AG04450 (cell line): ENCODE measurements at regions of chr7 and their contacts with region 1.

Region 1: GRCh38 chr7:155344600-155345433 is 47.1 kb downstream of the INSIG1 start:
- DNase-seq: peak; percentile 26
- H3K4me3 ChIP-seq: peak overlapping the region; percentile 43
- H3K27ac ChIP-seq: no peak overlapping the region
- H3K27me3 ChIP-seq: no peaks in the 10 kb centered on the region
- CTCF ChIP-seq: peak; percentile 64

Region 2: DNA sequence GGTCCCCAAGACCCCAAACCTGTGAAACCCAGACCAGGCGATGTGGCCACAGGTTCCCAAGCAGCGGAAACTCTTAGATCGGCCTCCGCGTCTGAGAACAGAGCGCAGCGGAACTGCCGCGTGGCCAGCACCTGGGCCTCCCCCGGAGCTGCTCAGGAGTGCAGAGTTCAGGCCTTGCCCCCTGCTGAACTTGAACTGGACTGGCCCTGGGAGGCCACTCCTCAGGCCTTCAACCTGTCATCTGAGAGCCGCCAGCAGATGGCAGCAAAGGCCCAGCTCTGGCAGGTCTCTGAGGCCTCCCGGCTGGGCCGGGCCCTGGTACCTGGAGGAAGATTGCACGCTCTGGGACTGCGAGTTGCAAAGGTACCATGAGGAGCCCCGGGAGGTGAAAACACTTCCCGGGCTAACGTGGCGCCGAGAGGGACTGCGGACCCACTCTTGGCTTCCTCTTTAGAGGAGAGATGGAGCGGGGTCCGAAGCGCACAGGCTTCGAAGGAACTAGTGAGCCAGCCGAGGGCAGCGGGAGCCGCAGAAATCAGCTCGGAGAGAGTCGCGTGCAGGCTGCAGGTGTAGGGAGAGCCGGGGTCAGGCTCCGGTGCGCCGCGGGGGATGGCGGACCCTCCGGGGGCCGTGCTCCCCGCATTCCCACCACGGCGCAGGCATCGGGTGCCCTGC is 431.0 kb before region 1 on chr7:
- CTCF ChIA-PET with region 1: interaction called, 20 read pairs
- POLR2A ChIA-PET with region 1: no interaction called
- DNase-seq: peak; percentile 26
- H3K4me3 ChIP-seq: peak overlapping the region; percentile 32; the same call in 1 of the 2 replicates
- H3K27ac ChIP-seq: no peak overlapping the region
- H3K27me3 ChIP-seq: peaks cover 2% of the 10 kb centered on the region
- CTCF ChIP-seq: peak; percentile 94

Region 3: GRCh38 chr7:154978017-154978416 is 366.8 kb before region 1 on chr7:
- CTCF ChIA-PET with region 1: interaction called, 13 read pairs
- POLR2A ChIA-PET with region 1: no interaction called
- DNase-seq: no peak
- H3K4me3 ChIP-seq: no peak overlapping the region
- H3K27ac ChIP-seq: no peak overlapping the region
- H3K27me3 ChIP-seq: no peaks in the 10 kb centered on the region
- CTCF ChIP-seq: no peak

Region 4: DNA sequence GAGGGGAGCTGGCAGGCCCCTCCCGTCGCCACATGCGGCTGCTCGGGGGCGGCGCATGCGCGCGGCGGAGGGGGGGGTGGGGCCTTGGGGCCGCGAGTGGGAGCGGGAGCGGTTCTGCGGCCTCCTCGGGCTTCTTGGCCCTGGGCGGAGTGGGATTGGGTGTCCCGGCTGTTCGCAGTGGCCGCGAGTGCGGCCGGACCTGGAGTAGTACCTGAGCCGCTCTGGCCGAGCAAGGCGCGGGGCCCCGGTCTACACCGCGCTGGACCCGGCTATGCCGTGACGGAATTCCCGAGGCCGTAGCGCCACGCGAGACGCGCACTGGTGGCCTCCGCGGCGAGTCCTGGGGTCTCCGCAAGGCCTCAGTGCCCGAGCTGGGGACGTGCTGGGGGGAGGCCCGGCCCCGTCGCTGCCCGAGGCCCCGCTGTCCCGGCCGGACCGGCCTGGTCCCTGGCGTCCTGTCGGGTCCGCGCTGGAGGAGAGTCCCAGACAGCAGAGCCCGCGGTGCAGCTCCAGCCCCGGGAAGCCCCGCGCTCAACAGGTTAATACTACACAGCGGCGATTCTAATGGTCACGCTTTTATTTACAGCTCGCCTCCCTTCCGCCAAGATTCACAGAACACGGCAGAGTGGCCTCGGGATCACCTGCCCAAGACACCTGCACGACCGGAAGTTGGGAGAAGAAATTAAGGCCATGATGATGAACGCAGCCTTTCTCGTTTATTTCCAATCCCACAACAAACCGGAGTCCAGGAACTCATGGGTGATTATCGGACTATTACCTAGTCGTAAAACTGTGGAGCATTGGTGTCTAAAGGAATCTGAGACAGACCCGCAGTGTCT is 341.2 kb before region 1 on chr7:
- CTCF ChIA-PET with region 1: interaction called, 11 read pairs
- POLR2A ChIA-PET with region 1: no interaction called
- DNase-seq: peak; percentile 60
- H3K4me3 ChIP-seq: peak overlapping the region; percentile 85
- H3K27ac ChIP-seq: peak overlapping the region; percentile 39
- H3K27me3 ChIP-seq: no peaks in the 10 kb centered on the region
- CTCF ChIP-seq: no peak

Region 5: DNA sequence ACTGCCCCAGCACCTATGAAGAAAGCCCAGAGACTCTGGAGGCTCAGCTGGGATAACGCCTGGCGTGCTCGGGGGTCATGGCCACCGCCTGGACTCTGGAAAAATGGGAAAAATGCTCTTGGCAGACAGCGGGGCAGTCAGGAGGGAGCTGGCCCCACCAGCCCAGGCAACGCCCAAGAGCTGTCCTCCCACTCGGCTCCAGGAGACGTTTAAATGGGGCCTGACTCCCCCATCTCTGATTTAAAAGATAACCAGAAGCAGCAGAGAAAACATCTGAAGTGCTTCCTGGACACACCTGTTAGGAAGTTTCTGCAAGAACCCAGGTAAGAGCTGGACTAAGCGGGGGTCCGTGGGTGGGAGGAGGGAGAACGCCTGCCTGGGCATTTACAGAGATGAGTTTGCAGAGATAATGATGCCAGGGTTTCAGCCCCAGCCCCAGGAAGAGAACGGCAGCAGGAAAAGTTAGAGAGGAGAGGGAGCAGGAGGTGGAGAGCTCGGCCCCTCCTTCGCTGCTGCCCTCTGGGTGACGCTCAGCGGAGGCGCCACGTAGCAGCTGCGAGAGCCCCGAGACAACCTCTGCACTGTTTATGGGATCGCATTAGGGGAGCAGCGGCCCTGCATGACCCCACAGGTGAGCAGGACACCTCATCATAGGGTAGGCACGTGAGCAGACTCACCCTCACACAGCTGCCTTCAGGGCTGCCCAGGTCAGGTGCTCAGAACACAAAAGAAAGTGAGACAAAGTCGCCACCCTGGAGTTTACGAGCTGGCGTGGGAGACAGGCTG is 130.7 kb before region 1 on chr7:
- CTCF ChIA-PET with region 1: interaction called, 10 read pairs
- POLR2A ChIA-PET with region 1: no interaction called
- DNase-seq: no peak
- H3K4me3 ChIP-seq: peak overlapping the region; percentile 41
- H3K27ac ChIP-seq: no peak overlapping the region
- H3K27me3 ChIP-seq: no peaks in the 10 kb centered on the region
- CTCF ChIP-seq: no peak

Region 6: GRCh38 chr7:155380221-155380861 is 35.5 kb after region 1 on chr7:
- CTCF ChIA-PET with region 1: interaction called, 11 read pairs
- POLR2A ChIA-PET with region 1: no interaction called
- DNase-seq: peak; percentile 18
- H3K4me3 ChIP-seq: no peak overlapping the region
- H3K27ac ChIP-seq: no peak overlapping the region
- H3K27me3 ChIP-seq: peaks cover 81% of the 10 kb centered on the region
- CTCF ChIP-seq: peak; percentile 76